ENCODE measurements at regions of chr7 and their contacts with region 1.

Region 1: DNA sequence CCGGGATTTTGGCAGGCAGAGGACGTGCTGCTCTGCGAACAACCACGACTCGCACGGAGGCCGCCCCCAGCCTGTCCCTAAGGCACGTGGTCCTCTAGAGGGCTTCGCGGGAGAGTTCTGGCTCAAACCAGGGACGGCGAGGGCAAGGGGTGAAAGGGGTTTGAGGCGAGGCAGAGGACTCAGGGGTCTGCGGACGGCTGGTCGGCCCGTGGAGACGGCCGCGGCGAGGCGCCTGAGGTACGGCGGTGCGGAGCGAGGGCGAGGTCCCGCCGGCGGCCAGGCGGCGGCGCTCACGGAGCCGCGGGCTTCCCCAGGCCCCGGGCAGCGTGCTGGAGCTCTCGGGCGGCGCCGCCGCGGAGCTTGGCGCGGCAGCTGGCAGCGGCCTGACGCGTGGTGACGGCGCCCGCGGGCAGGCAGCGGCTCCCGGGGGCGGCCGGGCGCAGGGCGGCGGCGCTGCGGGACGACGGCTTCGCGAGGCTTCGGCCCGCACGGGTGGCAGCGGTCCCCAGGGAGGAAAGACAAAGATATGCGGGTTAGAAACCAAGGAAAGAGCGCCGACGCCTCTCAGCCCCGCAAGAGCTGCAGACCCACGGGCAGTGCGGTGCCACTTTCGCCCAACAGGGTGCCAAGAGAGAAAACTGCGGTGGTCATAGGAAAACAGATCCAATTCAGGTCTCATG is 44.8 kb downstream of the ZNF800 start:
- DNase-seq: peak; percentile 59 to 76 (median 73)
- H3K4me3 ChIP-seq: peak overlapping the region in 2 of 4 donors; percentile 20 to 46
- H3K27ac ChIP-seq: no peak overlapping the region
- H3K4me1 ChIP-seq: no peaks in the 10 kb centered on the region
- H3K27me3 ChIP-seq: no peaks in the 10 kb centered on the region
- CTCF ChIP-seq: peak in 4 of 6 experiments; percentile 11 to 74 (median 57)
- POLR2A ChIP-seq: no peak

Region 2: GRCh38 chr7:127514499-127514898 is 166.8 kb after region 1 on chr7:
- intact Hi-C with region 1: loop called in 1 of 2 experiments (anchors 10 kb)
- DNase-seq: no peak
- H3K4me3 ChIP-seq: no peak overlapping the region
- H3K27ac ChIP-seq: no peak overlapping the region
- H3K4me1 ChIP-seq: no peaks in the 10 kb centered on the region
- H3K27me3 ChIP-seq: peaks cover 5% of the 10 kb centered on the region
- CTCF ChIP-seq: peak in 5 of 6 experiments; percentile 7 to 46 (median 37)
- POLR2A ChIP-seq: no peak

Region 3: GRCh38 chr7:127541548-127541947 is 193.8 kb after region 1 on chr7:
- intact Hi-C with region 1: no loop called
- DNase-seq: no peak
- H3K4me3 ChIP-seq: no peak overlapping the region
- H3K27ac ChIP-seq: no peak overlapping the region
- H3K4me1 ChIP-seq: no peaks in the 10 kb centered on the region
- H3K27me3 ChIP-seq: no peaks in the 10 kb centered on the region
- CTCF ChIP-seq: no peak
- POLR2A ChIP-seq: no peak